H1 (cell line): ENCODE measurements at regions of chr3 and their contacts with region 1.

Region 1: GRCh38 chr3:69120879-69121464 is 1.4 kb downstream of the LMOD3 start:
- DNase-seq: peak; percentile 70 to 91
- H3K4me3 ChIP-seq: no peak overlapping the region
- H3K27ac ChIP-seq: no peak overlapping the region
- H3K4me1 ChIP-seq: no peaks in the 10 kb centered on the region
- H3K27me3 ChIP-seq: no peaks in the 10 kb centered on the region
- CTCF ChIP-seq: peak in 2 of 3 experiments; percentile 81 to 95; a peak in 3 of 4 replicates
- EP300 ChIP-seq: no peak
- POLR2A ChIP-seq: no peak
- RAD21 ChIP-seq: peak; percentile 91 to 92

Region 2: GRCh38 chr3:69099576-69099975 is 21.4 kb before region 1 on chr3:
- CTCF ChIA-PET with region 1: interaction called, 13 read pairs
- POLR2A ChIA-PET with region 1: no interaction called
- DNase-seq: no peak
- H3K4me3 ChIP-seq: no peak overlapping the region
- H3K27ac ChIP-seq: no peak overlapping the region
- H3K4me1 ChIP-seq: no peaks in the 10 kb centered on the region; a peak in 2 of 7 replicates
- H3K27me3 ChIP-seq: no peaks in the 10 kb centered on the region
- CTCF ChIP-seq: no peak
- EP300 ChIP-seq: no peak
- POLR2A ChIP-seq: no peak
- RAD21 ChIP-seq: no peak

Region 3: GRCh38 chr3:69137412-69137811 is 16.4 kb after region 1 on chr3:
- CTCF ChIA-PET with region 1: interaction called, 33 read pairs
- POLR2A ChIA-PET with region 1: no interaction called
- DNase-seq: no peak
- H3K4me3 ChIP-seq: no peak overlapping the region
- H3K27ac ChIP-seq: no peak overlapping the region
- H3K4me1 ChIP-seq: no peaks in the 10 kb centered on the region
- H3K27me3 ChIP-seq: peaks cover 0 to 5% (median 0%) of the 10 kb centered on the region in 4 experiments; a peak in 1 of 7 replicates
- CTCF ChIP-seq: no peak
- EP300 ChIP-seq: no peak
- POLR2A ChIP-seq: no peak
- RAD21 ChIP-seq: no peak

Region 4: DNA sequence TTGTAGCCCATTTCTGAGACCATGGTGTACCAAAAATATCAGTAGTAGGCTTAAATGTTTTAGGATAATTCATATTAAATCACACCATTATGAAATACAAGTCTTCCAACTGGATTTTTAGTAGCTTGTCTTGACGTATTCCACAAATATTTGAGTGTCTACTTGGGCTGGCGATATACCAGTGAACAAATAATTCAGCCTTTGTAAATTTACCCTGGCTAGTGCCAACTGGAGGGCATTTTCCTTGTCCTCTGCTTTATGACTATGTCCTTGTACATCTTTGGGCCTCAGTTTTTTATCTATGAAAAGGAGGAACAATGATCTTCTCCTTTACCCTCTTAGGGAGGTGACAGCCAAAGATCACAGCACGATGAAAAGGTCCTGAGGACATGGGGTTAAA is 150.1 kb after region 1 on chr3:
- CTCF ChIA-PET with region 1: no interaction called
- POLR2A ChIA-PET with region 1: no interaction called
- DNase-seq: no peak
- H3K4me3 ChIP-seq: no peak overlapping the region
- H3K27ac ChIP-seq: no peak overlapping the region
- H3K4me1 ChIP-seq: no peaks in the 10 kb centered on the region
- H3K27me3 ChIP-seq: no peaks in the 10 kb centered on the region
- CTCF ChIP-seq: no peak
- EP300 ChIP-seq: no peak
- POLR2A ChIP-seq: no peak
- RAD21 ChIP-seq: no peak

Region 5: DNA sequence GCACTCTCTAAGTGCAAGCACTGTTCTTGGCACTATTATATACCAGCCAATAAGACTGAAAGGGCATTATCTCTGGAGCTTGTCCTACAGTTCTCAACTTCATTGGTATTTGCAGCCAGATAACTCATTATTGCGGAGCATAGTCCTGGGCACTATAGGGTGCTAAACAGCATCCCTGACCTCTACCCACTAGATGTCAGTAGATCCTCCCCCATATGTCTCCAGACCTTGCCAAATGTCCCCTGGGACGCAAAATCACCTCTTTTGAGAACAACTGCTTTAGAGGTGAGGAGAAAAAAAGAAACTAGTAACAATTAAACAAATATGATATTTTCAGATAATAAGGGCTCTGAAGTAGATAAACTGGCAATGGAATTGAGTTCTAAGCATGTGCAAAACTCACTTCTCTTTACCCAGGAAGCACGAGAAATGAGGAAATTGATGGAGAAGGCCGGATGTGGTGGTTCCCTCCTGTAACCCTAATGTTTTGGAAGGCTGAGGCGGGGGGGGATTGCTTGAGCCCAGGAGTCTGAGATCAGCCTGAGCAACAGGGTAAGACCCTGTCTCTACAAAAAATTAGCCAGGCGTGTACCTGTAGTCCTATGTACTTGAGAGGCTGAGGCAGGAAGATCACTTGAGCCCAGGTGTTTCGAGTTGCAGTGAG is 203.5 kb after region 1 on chr3:
- CTCF ChIA-PET with region 1: interaction called, 10 read pairs
- POLR2A ChIA-PET with region 1: no interaction called
- DNase-seq: peak in 1 of 2 experiments; percentile 5
- H3K4me3 ChIP-seq: no peak overlapping the region
- H3K27ac ChIP-seq: no peak overlapping the region
- H3K4me1 ChIP-seq: peaks cover 0 to 4% (median 0%) of the 10 kb centered on the region in 4 experiments; a peak in 1 of 7 replicates
- H3K27me3 ChIP-seq: no peaks in the 10 kb centered on the region; a peak in 1 of 7 replicates
- CTCF ChIP-seq: peak; percentile 49 to 83 (median 74)
- EP300 ChIP-seq: no peak
- POLR2A ChIP-seq: no peak
- RAD21 ChIP-seq: peak; percentile 88 to 94

Region 6: DNA sequence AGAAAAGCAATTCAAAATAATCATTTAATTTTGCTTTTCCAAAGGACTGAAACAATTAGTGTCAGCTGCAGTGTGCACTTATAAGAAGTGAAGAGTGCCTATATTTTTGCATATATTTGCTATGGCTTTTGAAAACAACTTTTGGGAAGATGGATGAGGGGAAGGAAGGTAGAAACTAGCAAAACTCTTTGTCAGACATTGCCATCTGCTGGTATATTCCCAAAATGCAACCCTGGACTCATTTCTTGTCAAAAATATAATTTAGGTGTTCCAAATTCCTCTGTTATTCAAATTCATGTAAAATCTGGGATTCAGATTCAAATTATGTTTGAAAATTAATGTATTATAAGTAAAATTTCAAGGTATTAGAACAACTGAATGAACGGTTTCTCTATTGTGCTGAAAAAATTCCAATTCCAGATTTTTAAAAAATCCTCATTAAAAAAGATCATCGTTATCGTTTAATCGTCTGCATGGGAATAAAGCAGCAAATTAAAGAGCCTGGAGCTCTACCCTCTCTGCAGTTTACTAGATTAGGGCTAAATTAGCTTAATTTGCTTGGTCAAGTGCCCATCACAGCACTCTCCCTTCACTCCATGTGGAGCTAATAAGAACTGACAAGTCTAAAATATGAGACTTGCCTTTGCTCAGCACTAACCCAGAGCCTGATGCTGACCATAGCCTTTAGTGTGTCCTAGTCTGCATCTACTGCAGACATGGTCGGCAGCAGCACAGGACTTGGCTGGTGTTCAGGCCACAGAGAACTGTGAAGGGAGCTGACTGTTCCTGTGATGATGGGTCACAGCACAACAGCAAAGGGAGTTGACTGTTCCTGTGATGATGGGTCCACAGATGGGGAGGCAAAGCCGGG is 550.3 kb after region 1 on chr3:
- CTCF ChIA-PET with region 1: interaction called, 13 read pairs
- POLR2A ChIA-PET with region 1: no interaction called
- DNase-seq: no peak
- H3K4me3 ChIP-seq: no peak overlapping the region
- H3K27ac ChIP-seq: no peak overlapping the region
- H3K4me1 ChIP-seq: no peaks in the 10 kb centered on the region
- H3K27me3 ChIP-seq: no peaks in the 10 kb centered on the region
- CTCF ChIP-seq: peak in 2 of 3 experiments; percentile 52 to 58; a peak in 2 of 4 replicates
- EP300 ChIP-seq: no peak
- POLR2A ChIP-seq: no peak
- RAD21 ChIP-seq: peak; percentile 85 to 87